ENCODE measurements at regions of chr7 and their contacts with region 1.

Region 1: GRCh38 chr7:139502226-139502625 is 18.8 kb upstream of the KLRG2 start:
- DNase-seq: no peak
- CTCF ChIP-seq: no peak

Region 2: GRCh38 chr7:139068544-139069399 is 433.5 kb before region 1 on chr7:
- CTCF ChIA-PET with region 1: no interaction called
- POLR2A ChIA-PET with region 1: no interaction called
- DNase-seq: no peak
- CTCF ChIP-seq: no peak

Region 3: GRCh38 chr7:139487366-139488080 is 14.7 kb before region 1 on chr7:
- CTCF ChIA-PET with region 1: interaction called, 17 read pairs
- POLR2A ChIA-PET with region 1: no interaction called
- DNase-seq: no peak
- CTCF ChIP-seq: no peak

Region 4: GRCh38 chr7:139538881-139539635 is 36.8 kb after region 1 on chr7:
- CTCF ChIA-PET with region 1: no interaction called
- POLR2A ChIA-PET with region 1: no interaction called
- DNase-seq: no peak
- CTCF ChIP-seq: no peak